Activated CD4-positive, alpha-beta memory T cell treated with anti-CD3 and anti-CD28 coated beads, Interleukin-2, amount 10 ng/mL, durations not matched to agents 7 days and 5 days (primary cell): ENCODE measurements at regions of chr11 and their contacts with region 1.

Region 1: GRCh38 chr11:65615229-65615941 is at the start of gene PCNX3:
- DNase-seq: peak; percentile 100
- H3K4me3 Mint-ChIP-seq: peak within 1 kb of the TSS; percentile 98
- H3K27ac Mint-ChIP-seq: peak within 1 kb of the TSS; percentile 95
- H3K4me1 Mint-ChIP-seq: peaks cover 44% of the 10 kb centered on the region
- H3K27me3 Mint-ChIP-seq: no peaks in the 10 kb centered on the region
- total RNA-seq, gene PCNX3: 39.8 to 40.3 TPM

Region 2: GRCh38 chr11:65569973-65570918 is 45.1 kb before region 1 on chr11 and contains the start of gene ZNRD2:
- CTCF ChIA-PET with region 1: interaction called, 22 read pairs
- POLR2A ChIA-PET with region 1: interaction called, 40 read pairs
- DNase-seq: peak; percentile 99
- H3K4me3 Mint-ChIP-seq: peak within 1 kb of the TSS; percentile 100
- H3K27ac Mint-ChIP-seq: peak within 1 kb of the TSS; percentile 99
- H3K4me1 Mint-ChIP-seq: peaks cover 71% of the 10 kb centered on the region
- H3K27me3 Mint-ChIP-seq: no peaks in the 10 kb centered on the region
- total RNA-seq, gene ZNRD2: 25.3 to 27.8 TPM

Region 3: DNA sequence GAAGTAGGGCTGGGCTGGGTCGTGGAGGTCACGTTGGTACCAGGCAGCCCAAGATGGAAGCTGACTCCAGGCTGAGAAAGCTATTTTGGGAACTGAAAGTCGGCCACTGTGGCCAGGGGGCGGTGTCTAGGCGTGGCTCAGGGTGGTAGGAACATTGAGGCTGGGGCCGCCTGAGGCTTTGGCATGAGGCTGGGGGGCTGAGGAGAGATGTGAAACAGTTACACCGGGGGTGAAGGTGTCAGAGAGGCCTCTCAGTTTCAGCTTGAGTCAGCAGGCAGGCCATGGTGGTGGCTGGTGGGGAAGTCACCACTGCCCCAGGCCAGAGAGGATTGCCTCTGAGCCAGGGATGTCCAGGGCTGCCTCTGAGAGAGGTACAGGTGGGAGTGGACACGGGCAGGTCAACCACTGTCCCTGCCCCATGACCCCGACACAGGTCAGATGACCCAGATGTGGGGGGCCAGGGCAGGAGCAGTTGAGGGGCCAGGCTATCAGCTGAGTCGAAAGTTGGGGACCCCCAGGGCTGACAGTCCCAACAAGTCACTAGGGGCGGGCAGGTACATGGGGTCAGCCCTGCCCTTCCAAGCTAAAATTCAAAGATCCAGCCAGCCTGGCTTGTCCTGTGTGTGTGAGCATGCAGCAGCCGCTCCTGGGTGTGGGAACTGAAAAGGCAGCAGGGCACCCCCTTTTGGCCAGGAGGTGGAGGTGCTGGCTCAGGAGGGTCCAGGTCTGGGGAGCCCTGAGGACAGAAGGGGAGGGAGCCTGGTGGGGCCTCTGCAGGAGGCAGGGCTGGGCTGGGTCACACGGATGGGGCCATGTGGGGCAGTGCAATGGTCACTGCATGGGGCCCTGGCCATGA is 27.0 kb before region 1 on chr11:
- CTCF ChIA-PET with region 1: interaction called, 12 read pairs
- POLR2A ChIA-PET with region 1: interaction called, 42 read pairs
- DNase-seq: peak; percentile 83
- H3K4me3 Mint-ChIP-seq: peak overlapping the region; percentile 44
- H3K27ac Mint-ChIP-seq: peak overlapping the region; percentile 95
- H3K4me1 Mint-ChIP-seq: peaks cover 43% of the 10 kb centered on the region
- H3K27me3 Mint-ChIP-seq: no peaks in the 10 kb centered on the region

Region 4: GRCh38 chr11:65604258-65604657 is 11.1 kb before region 1 on chr11:
- CTCF ChIA-PET with region 1: no interaction called
- POLR2A ChIA-PET with region 1: interaction called, 18 read pairs
- DNase-seq: no peak
- H3K4me3 Mint-ChIP-seq: no peak overlapping the region
- H3K27ac Mint-ChIP-seq: no peak overlapping the region
- H3K4me1 Mint-ChIP-seq: peaks cover 11% of the 10 kb centered on the region
- H3K27me3 Mint-ChIP-seq: no peaks in the 10 kb centered on the region

Region 5: DNA sequence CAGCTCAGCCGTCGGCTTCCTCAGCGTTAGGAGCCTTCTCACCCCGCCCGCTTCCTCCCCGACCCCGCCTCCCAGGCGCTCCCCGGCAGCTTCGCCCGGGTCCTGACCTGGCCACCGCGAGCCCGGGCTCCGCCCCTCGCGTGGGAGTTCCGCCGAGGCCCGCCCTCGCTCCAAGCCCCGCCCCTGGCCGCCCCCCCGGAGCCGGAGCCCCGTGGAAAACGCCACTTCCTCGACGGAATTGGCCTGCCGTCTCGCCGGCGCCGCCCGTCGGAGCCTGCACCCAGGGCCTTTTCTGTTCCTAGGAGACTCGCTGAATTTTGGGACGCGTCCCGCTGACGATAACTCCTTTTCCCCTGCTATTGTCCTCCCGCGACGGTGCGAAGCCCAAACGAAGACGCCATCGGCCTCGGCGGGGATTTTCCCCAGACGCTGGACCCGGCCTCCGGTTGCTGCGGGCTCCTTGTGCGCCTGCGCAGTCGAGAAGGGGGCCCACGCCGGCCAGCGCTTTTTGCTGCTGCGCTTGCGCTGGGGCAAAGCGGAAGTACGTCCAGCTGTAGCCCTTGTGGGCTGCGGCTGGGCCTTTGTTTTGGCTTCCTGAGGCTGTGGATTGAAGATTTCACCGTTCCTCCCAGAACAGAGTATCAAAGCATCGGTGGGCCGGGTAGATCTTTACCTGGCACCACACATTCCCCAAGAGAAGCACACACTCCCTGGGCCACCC is 37.3 kb after region 1 on chr11:
- CTCF ChIA-PET with region 1: no interaction called
- POLR2A ChIA-PET with region 1: interaction called, 34 read pairs
- DNase-seq: peak; percentile 96
- H3K4me3 Mint-ChIP-seq: peak overlapping the region; percentile 74
- H3K27ac Mint-ChIP-seq: peak overlapping the region; percentile 93
- H3K4me1 Mint-ChIP-seq: peaks cover 50% of the 10 kb centered on the region
- H3K27me3 Mint-ChIP-seq: no peaks in the 10 kb centered on the region